ENCODE measurements at regions of chr18 and their contacts with region 1.

Region 1: GRCh38 chr18:4921548-4921947 is 275.5 kb downstream of the AKAIN1 start:
- DNase-seq: no peak
- ATAC-seq: no peak
- H3K4me3 ChIP-seq: no peak overlapping the region
- H3K4me3 Mint-ChIP-seq: no peak overlapping the region
- H3K27ac ChIP-seq: no peak overlapping the region
- H3K27ac Mint-ChIP-seq: no peak overlapping the region
- H3K4me1 ChIP-seq: no peaks in the 10 kb centered on the region
- H3K4me1 Mint-ChIP-seq: no peaks in the 10 kb centered on the region
- H3K27me3 ChIP-seq: no peaks in the 10 kb centered on the region
- H3K27me3 Mint-ChIP-seq: no peaks in the 10 kb centered on the region
- CTCF ChIP-seq: no peak

Region 2: DNA sequence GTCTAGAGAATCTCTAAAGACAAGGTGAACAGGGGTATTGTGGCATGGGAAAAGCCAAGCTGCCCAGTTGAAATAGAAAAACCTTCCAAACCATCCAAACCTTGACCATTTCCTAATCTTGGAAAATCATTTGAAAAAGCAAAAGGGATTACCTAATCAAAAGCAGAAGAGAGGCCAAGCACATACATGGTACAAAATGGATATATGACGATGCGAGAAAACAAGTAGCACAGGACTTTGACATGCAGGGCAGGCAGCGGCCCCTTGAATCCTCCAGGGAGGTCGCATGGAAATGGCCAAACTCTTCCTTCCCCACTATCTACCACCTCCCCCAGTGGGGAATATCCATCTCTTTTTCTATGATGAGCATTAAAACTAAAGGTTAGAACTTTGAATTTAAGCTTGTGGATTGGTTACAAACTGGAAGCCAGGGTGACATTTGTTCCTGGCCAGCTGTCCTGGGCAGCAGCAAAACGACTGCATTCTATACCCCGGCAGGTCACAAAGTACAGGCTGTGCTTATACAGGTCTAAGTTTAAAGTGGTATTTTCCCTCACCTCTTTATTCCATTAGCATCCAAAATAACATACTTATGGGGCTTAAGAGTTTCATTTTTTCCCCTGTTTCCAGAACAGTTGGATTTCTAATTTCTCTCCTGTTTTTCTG is 1726.5 kb before region 1 on chr18:
- CTCF ChIA-PET with region 1: no interaction called
- POLR2A ChIA-PET with region 1: no interaction called
- intact Hi-C with region 1: no loop called
- DNase-seq: no peak
- ATAC-seq: no peak
- H3K4me3 ChIP-seq: no peak overlapping the region
- H3K4me3 Mint-ChIP-seq: no peak overlapping the region
- H3K27ac ChIP-seq: no peak overlapping the region
- H3K27ac Mint-ChIP-seq: no peak overlapping the region
- H3K4me1 ChIP-seq: no peaks in the 10 kb centered on the region
- H3K4me1 Mint-ChIP-seq: no peaks in the 10 kb centered on the region
- H3K27me3 ChIP-seq: no peaks in the 10 kb centered on the region
- H3K27me3 Mint-ChIP-seq: no peaks in the 10 kb centered on the region
- CTCF ChIP-seq: no peak

Region 3: DNA sequence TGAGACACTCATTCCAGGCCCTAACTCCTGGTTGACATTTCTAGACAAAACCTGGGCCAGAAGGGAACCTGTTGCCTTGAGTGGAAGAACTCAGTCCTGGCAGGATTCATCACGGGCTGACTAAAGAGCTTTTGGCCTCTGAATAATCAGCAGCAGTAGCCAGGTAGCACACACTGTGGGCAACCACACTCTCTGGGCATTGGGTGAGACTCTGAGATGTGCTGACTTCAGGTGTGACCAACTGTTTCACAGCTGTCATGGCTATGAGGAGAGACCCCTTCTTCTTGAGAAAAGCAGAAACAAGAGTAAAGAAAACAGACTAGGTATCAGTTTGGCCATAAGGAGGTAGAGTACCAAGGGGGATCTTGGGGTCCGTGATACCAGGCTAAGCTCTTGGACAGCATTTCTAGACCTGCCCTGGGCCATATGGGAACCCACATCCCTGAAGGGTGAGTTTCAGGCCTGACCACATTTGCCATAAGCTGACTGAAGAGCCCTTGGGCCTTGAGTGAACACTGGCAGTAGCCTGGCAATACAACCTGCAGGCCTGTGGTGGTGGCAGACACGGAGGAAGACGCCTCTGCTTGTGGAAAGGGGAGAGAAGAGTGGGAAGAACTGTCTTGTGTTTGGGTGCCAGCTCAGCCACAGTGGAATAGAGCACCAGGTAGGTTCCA is 697.4 kb before region 1 on chr18:
- CTCF ChIA-PET with region 1: no interaction called
- POLR2A ChIA-PET with region 1: no interaction called
- intact Hi-C with region 1: no loop called
- DNase-seq: no peak
- ATAC-seq: no peak
- H3K4me3 ChIP-seq: no peak overlapping the region
- H3K4me3 Mint-ChIP-seq: no peak overlapping the region
- H3K27ac ChIP-seq: no peak overlapping the region
- H3K27ac Mint-ChIP-seq: no peak overlapping the region
- H3K4me1 ChIP-seq: no peaks in the 10 kb centered on the region
- H3K4me1 Mint-ChIP-seq: no peaks in the 10 kb centered on the region
- H3K27me3 ChIP-seq: no peaks in the 10 kb centered on the region
- H3K27me3 Mint-ChIP-seq: no peaks in the 10 kb centered on the region
- CTCF ChIP-seq: no peak

Region 4: GRCh38 chr18:4854671-4855070 is 66.9 kb before region 1 on chr18:
- CTCF ChIA-PET with region 1: no interaction called
- POLR2A ChIA-PET with region 1: no interaction called
- intact Hi-C with region 1: loop called in 1 of 2 experiments (anchors 2 kb)
- DNase-seq: no peak
- ATAC-seq: no peak
- H3K4me3 ChIP-seq: no peak overlapping the region
- H3K4me3 Mint-ChIP-seq: no peak overlapping the region
- H3K27ac ChIP-seq: no peak overlapping the region
- H3K27ac Mint-ChIP-seq: no peak overlapping the region
- H3K4me1 ChIP-seq: no peaks in the 10 kb centered on the region
- H3K4me1 Mint-ChIP-seq: no peaks in the 10 kb centered on the region
- H3K27me3 ChIP-seq: no peaks in the 10 kb centered on the region
- H3K27me3 Mint-ChIP-seq: no peaks in the 10 kb centered on the region
- CTCF ChIP-seq: no peak

Measured in CD8-positive, alpha-beta T cell (primary cell).